Ovary (tissue), 10 donors: ENCODE measurements at regions of chr16 and their contacts with region 1.

Region 1: DNA sequence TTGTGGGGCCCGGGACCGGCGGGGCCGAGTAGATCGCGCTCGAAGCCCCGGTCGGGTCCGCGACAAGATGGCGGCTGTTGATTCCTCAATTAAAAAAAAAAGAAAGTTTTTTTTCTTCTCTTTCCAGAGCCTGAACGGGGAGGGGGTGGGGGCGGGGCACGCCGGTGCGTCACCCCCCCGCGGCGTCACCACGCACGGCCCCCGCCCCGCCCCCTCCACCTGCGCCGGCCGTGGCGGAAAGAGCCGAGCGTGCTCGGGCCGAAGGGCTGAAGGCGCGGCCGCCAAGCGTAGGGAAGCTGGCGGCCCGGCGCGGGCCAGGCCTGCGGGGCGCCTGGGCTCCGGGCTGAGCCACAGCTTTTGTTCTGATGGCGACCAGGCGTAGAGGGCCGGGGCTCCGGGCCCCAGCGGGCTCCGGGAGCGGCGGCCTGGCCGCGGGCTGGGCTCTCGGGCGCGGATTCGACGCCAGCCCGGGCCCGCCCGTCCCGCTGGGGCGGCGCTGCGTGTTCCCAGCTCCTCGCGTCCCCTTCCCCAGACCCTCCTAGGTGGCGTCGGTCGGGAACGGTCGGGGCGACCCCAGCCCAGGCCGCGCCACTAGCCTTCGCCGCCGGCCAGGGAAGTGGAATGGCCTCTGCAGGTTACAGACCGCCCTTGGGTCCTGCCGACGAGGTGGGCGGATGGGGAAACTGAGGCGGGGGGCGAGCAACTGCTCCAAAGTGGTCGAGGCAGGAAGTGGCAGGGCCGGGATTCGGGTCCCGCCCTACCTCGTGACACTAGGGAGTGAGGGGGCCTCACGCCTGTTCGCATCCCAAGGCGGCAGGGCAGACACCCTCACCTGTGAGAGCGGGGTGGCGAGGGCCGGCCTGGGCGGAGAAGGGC is at the start of gene CREBBP:
- DNase-seq: peak; percentile 82 to 93 (median 89)
- H3K4me3 ChIP-seq: peak within 1 kb of the TSS; percentile 99
- H3K27ac ChIP-seq: peak within 1 kb of the TSS; percentile 88 to 94
- H3K4me1 ChIP-seq: peaks cover 12% of the 10 kb centered on the region
- H3K27me3 ChIP-seq: no peaks in the 10 kb centered on the region
- CTCF ChIP-seq: no peak
- EP300 ChIP-seq: no peak
- POLR2A ChIP-seq: peak; percentile 26
- total RNA-seq, gene CREBBP: 50.3 to 94.5 (median 78.3) TPM

Region 2: DNA sequence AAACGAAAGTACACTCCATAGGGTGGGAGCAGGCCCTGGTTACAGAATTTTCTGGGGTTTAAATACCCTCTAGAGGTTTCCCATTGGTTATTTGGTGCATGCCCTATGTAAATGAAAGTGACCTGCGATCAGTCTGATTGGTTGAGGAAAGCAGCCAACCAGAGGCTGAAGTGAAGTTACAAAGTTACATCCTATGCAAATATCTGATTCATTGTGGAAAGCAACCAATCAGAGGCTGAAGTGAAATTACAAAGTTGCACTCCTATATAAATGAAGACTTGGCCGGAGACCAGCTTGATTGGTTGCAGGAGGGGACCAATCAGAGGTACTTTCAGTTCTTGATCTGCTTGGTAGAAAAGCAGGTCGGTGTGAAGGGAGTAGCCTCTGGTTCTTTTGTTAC is 412.9 kb before region 1 on chr16:
- intact Hi-C with region 1: no loop called
- DNase-seq: no peak
- H3K4me3 ChIP-seq: no peak overlapping the region
- H3K27ac ChIP-seq: no peak overlapping the region
- H3K4me1 ChIP-seq: peaks cover 4% of the 10 kb centered on the region
- H3K27me3 ChIP-seq: no peaks in the 10 kb centered on the region
- CTCF ChIP-seq: no peak
- EP300 ChIP-seq: no peak
- POLR2A ChIP-seq: no peak

Region 3: GRCh38 chr16:3690470-3690928 is 190.4 kb before region 1 on chr16:
- intact Hi-C with region 1: loop called (anchors 5 to 10 kb)
- DNase-seq: peak; percentile 91 to 95 (median 94)
- H3K4me3 ChIP-seq: peak overlapping the region; percentile 16
- H3K27ac ChIP-seq: no peak overlapping the region
- H3K4me1 ChIP-seq: peaks cover 5% of the 10 kb centered on the region
- H3K27me3 ChIP-seq: no peaks in the 10 kb centered on the region
- CTCF ChIP-seq: peak; percentile 90 to 94 (median 93)
- EP300 ChIP-seq: no peak
- POLR2A ChIP-seq: no peak

Region 4: DNA sequence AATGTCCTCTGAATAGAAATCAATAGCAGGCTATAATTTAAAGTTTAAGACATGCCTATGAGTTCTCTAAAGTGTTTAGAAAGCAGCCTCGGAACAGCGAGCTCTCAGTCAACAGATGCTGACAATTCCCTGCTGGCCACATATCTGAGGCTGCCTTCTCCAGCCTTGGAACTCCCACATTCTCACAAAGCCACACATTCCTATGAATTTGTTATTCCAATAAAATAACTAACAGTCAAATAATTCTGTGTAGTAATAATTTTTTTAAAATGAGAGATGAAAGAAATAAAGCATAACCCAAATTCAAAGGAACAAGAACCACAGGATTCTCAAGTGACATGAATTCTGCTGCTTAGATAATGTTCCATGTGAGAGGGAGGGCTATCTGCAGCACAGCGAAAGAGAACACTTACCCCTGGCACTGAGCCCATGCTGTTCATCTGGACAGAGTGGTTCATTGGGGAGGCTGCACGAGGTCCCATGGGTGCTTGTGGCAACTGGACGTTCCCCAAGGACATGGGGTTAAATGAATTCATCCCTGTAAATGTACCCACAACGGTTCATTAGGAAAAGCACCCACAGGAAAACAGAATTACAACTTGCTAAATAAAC is 106.6 kb before region 1 on chr16:
- intact Hi-C with region 1: loop called in 1 of 4 experiments (anchors 10 kb)
- DNase-seq: peak; percentile 58 to 70 (median 62)
- H3K4me3 ChIP-seq: no peak overlapping the region
- H3K27ac ChIP-seq: peak overlapping the region in 1 of 2 donors; percentile 21
- H3K4me1 ChIP-seq: peaks cover 4% of the 10 kb centered on the region
- H3K27me3 ChIP-seq: no peaks in the 10 kb centered on the region
- CTCF ChIP-seq: no peak
- EP300 ChIP-seq: no peak
- POLR2A ChIP-seq: no peak

Region 5: GRCh38 chr16:3950343-3951193 is 69.7 kb after region 1 on chr16:
- intact Hi-C with region 1: loop called in 1 of 4 experiments (anchors 5 kb)
- DNase-seq: peak; percentile 82 to 92 (median 86)
- H3K4me3 ChIP-seq: peak overlapping the region; percentile 23
- H3K27ac ChIP-seq: peak overlapping the region; percentile 43 to 75
- H3K4me1 ChIP-seq: peaks cover 19% of the 10 kb centered on the region
- H3K27me3 ChIP-seq: no peaks in the 10 kb centered on the region
- CTCF ChIP-seq: no peak
- EP300 ChIP-seq: peak; percentile 20
- POLR2A ChIP-seq: no peak